OCI-LY7 (cell line): ENCODE measurements at regions of chr20 and their contacts with region 1.

Region 1: DNA sequence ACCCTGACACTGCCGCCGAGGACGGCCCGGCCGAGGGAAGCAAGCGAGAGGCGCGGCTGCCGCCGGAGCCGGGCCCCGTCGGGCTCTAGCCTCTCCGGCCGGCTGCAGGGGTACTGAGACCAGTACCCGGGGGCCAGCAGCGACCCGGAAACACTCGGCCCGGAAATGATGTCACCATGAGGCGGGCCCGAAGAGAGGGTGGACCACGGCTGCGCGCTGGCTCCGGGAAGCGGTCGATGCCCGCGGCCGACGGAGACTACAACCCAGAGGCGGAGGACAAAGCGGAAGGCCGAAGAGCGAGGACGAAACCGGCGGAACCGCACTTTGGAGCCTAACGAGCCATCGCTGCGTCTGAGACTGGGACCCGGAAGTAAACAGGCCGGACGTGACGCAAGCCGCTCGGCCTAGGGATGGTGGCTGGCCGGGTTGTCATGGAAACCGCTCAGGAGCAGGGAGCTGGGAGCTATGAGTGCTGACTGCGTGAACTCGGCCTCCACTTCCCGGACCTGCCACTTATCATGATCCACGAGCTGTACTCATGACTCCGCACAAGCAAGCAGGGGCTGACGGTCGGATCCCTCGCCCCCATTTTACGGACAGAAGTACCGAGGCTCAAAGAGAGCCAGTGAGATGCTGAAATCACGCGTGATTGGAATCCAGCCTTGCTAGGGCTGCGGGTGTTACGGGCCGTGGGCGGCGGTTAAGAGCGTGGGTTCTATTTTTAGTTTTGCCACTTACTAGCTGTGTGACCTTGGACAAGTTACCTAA is at the start of gene SPATA2:
- DNase-seq: peak; percentile 96
- H3K4me3 ChIP-seq: peak within 1 kb of the TSS; percentile 98
- H3K27ac ChIP-seq: peak within 1 kb of the TSS; percentile 87
- H3K4me1 ChIP-seq: peaks cover 29% of the 10 kb centered on the region
- CTCF ChIP-seq: no peak; the same call in 1 of the 2 replicates
- total RNA-seq, gene SPATA2: 3.5 and 3.9 TPM in 2 replicates

Region 2: DNA sequence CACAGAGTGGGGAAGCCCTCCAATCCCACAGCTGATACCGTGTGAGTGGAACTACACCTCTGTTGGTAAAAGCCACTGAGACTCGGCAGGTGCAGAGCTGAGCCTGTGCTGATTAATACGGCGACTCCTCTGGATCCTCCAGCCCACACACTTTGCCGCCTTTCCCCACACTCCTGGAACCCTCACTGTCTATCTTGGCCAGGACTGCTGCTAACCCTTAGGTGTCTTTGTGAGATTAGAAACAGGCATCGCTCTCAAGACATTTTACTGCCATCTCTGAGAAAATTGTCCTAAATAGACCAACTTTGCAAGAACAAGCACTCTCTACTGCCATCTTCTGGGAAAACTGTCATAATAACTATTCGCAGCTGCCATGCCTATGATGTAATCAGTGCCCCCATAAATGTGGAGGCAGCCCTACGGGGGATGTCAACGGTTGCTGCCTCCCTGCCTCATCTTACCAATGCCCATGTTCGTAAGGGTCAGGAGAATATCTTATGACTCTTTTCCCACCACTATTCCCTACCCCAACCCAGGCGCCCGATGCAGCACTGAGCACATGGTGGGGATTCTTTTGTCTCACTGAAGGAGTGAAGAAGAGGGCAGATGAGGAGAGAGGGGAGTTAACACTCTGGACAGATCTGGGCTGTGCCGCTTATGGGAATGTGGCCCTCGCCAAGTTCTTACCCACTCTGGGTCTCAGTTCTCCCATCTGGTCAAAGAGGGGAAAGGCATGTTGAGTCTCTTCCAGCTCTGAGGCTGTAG is 406.9 kb before region 1 on chr20:
- CTCF ChIA-PET with region 1: no interaction called
- POLR2A ChIA-PET with region 1: interaction called, 10 read pairs
- intact Hi-C with region 1: no loop called
- DNase-seq: peak; percentile 73
- H3K4me3 ChIP-seq: no peak overlapping the region
- H3K27ac ChIP-seq: no peak overlapping the region
- H3K4me1 ChIP-seq: no peaks in the 10 kb centered on the region
- CTCF ChIP-seq: peak; percentile 77

Region 3: GRCh38 chr20:49928401-49929141 is 13.0 kb after region 1 on chr20:
- CTCF ChIA-PET with region 1: no interaction called
- POLR2A ChIA-PET with region 1: interaction called, 13 read pairs
- intact Hi-C with region 1: loop called (anchors 2 kb)
- DNase-seq: peak; percentile 88
- H3K4me3 ChIP-seq: no peak overlapping the region
- H3K27ac ChIP-seq: no peak overlapping the region
- H3K4me1 ChIP-seq: peaks cover 13% of the 10 kb centered on the region
- CTCF ChIP-seq: peak; percentile 97

Region 4: GRCh38 chr20:49936153-49937027 is 20.8 kb after region 1 on chr20 and contains the start of gene RNF114:
- CTCF ChIA-PET with region 1: interaction called, 3 read pairs
- POLR2A ChIA-PET with region 1: interaction called, 13 read pairs
- intact Hi-C with region 1: loop called (anchors 1 kb)
- DNase-seq: peak; percentile 96
- H3K4me3 ChIP-seq: peak within 1 kb of the TSS; percentile 86
- H3K27ac ChIP-seq: peak within 1 kb of the TSS; percentile 41
- H3K4me1 ChIP-seq: peaks cover 52% of the 10 kb centered on the region
- CTCF ChIP-seq: no peak
- total RNA-seq, gene RNF114: 48.4 and 51.9 TPM in 2 replicates

Region 5: DNA sequence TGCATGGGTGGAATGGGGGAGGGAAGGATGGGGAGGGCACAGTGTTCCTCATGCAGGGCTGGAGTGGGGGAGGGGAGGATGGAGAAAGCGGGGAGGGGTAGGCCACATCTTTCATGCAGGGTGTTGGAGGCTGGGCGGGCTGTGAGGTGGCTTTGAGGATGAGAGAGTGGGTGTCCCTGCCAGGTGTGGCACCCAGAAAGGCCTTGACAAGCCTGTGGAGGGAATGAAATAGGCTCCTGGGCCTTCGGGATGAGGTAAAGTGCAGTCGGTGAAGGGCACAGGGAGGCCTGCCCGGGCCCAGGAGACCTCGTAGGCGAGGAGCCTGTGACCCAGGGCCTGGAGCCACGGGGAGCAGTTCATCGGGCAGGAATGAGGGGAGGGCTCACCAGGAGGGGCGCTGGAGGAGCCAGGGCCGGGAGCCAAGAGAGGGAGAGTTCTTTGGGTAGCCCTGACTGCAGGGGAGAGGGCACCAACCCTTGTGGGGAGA is 282.7 kb after region 1 on chr20:
- CTCF ChIA-PET with region 1: no interaction called
- POLR2A ChIA-PET with region 1: no interaction called
- intact Hi-C with region 1: no loop called
- DNase-seq: no peak
- H3K4me3 ChIP-seq: no peak overlapping the region
- H3K27ac ChIP-seq: no peak overlapping the region
- H3K4me1 ChIP-seq: peaks cover 10% of the 10 kb centered on the region
- CTCF ChIP-seq: no peak